Left ventricle myocardium superior (tissue), 1 donor: ENCODE measurements at regions of chr2 and their contacts with region 1.

Region 1: GRCh38 chr2:168649105-168649504 is 153.3 kb upstream of the NOSTRIN start:
- DNase-seq: peak; percentile 60
- ATAC-seq: peak; percentile 67

Region 2: GRCh38 chr2:168521053-168521741 is 127.9 kb before region 1 on chr2:
- intact Hi-C with region 1: loop called (anchors 10 kb)
- DNase-seq: no peak
- ATAC-seq: peak; percentile 51